Activated naive CD4-positive, alpha-beta T cell treated with anti-CD3 and anti-CD28 coated beads, Interleukin-2, amount 10 ng/mL, durations not matched to agents 7 days and 5 days (primary cell): ENCODE measurements at regions of chr9 and their contacts with region 1.

Region 1: GRCh38 chr9:122099271-122099869 is 6.3 kb upstream of the TTLL11 start:
- DNase-seq: peak; percentile 85
- H3K4me3 Mint-ChIP-seq: peak overlapping the region; percentile 62
- H3K27ac Mint-ChIP-seq: no peak overlapping the region
- H3K4me1 Mint-ChIP-seq: peaks cover 12% of the 10 kb centered on the region
- H3K27me3 Mint-ChIP-seq: peaks cover 31% of the 10 kb centered on the region

Region 2: GRCh38 chr9:121839726-121840500 is 259.5 kb before region 1 on chr9:
- CTCF ChIA-PET with region 1: no interaction called
- DNase-seq: no peak
- H3K4me3 Mint-ChIP-seq: no peak overlapping the region
- H3K27ac Mint-ChIP-seq: no peak overlapping the region
- H3K4me1 Mint-ChIP-seq: peaks cover 3% of the 10 kb centered on the region
- H3K27me3 Mint-ChIP-seq: peaks cover 16% of the 10 kb centered on the region

Region 3: GRCh38 chr9:122087406-122088200 is 11.8 kb before region 1 on chr9:
- CTCF ChIA-PET with region 1: interaction called, 23 read pairs
- DNase-seq: no peak
- H3K4me3 Mint-ChIP-seq: no peak overlapping the region
- H3K27ac Mint-ChIP-seq: no peak overlapping the region
- H3K4me1 Mint-ChIP-seq: peaks cover 19% of the 10 kb centered on the region
- H3K27me3 Mint-ChIP-seq: no peaks in the 10 kb centered on the region

Region 4: DNA sequence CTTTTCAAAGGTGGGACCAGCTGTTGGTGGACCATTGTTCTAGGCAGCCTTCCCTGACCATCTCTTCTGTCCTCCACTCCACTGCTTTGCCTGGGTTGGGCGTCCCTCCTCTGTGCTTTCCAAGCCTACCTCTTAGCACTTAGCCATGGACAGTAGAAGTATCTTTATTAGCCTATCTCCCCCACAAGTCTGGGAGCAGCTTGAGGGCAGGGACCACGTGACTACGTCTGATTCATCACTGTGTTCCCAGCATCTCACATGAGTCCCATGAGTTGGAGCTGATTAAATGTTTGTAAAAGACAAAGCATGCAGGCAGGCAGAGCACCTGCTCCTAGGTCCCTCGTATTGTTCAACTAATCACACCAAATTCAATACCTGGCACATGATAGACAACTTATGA is 81.3 kb after region 1 on chr9:
- CTCF ChIA-PET with region 1: no interaction called
- DNase-seq: no peak
- H3K4me3 Mint-ChIP-seq: no peak overlapping the region
- H3K27ac Mint-ChIP-seq: no peak overlapping the region
- H3K4me1 Mint-ChIP-seq: no peaks in the 10 kb centered on the region
- H3K27me3 Mint-ChIP-seq: peaks cover 37% of the 10 kb centered on the region

Region 5: DNA sequence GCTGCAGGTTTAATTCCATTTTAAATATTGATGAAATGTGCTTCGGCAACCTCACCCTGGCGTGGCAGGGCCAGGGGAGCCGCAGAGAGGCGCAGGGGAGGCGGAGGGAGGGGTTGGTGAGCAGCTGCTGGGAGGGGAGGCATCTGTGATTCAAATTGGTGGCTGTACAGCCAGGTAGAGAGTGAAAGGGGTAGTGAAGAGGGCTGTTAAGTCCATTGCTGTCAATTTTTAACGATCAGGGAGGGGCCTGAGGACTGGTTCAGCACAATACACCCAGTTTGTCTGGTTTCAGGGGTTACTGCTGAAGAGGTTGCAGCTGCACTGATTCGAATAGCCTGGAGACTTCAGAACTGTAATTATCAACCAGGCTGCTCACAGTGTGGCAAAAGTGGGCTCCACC is 98.1 kb after region 1 on chr9:
- CTCF ChIA-PET with region 1: no interaction called
- DNase-seq: no peak
- H3K4me3 Mint-ChIP-seq: no peak overlapping the region
- H3K27ac Mint-ChIP-seq: no peak overlapping the region
- H3K4me1 Mint-ChIP-seq: no peaks in the 10 kb centered on the region
- H3K27me3 Mint-ChIP-seq: peaks cover 10% of the 10 kb centered on the region